PC-9 (cell line): ENCODE measurements at regions of chr20 and their contacts with region 1.

Region 1: GRCh38 chr20:50737352-50737751 is 6.0 kb downstream of the PARD6B start:
- DNase-seq: no peak
- H3K4me3 ChIP-seq: no peak overlapping the region
- H3K27ac ChIP-seq: peak overlapping the region; percentile 89; the same call in 1 of the 2 replicates
- H3K4me1 ChIP-seq: peaks cover 92% of the 10 kb centered on the region
- H3K27me3 ChIP-seq: no peaks in the 10 kb centered on the region
- CTCF ChIP-seq: no peak

Region 2: GRCh38 chr20:50645253-50646118 is 91.9 kb before region 1 on chr20:
- CTCF ChIA-PET with region 1: no interaction called
- POLR2A ChIA-PET with region 1: interaction called, 14 read pairs
- intact Hi-C with region 1: no loop called
- DNase-seq: peak; percentile 97 to 100
- H3K4me3 ChIP-seq: peak overlapping the region; percentile 16; the same call in 1 of the 2 replicates
- H3K27ac ChIP-seq: peak overlapping the region; percentile 86
- H3K4me1 ChIP-seq: peaks cover 62% of the 10 kb centered on the region
- H3K27me3 ChIP-seq: no peaks in the 10 kb centered on the region
- CTCF ChIP-seq: no peak

Region 3: GRCh38 chr20:50750145-50750671 is 12.9 kb after region 1 on chr20:
- CTCF ChIA-PET with region 1: interaction called, 5 read pairs
- POLR2A ChIA-PET with region 1: interaction called, 12 read pairs
- intact Hi-C with region 1: no loop called
- DNase-seq: no peak
- H3K4me3 ChIP-seq: no peak overlapping the region
- H3K27ac ChIP-seq: no peak overlapping the region
- H3K4me1 ChIP-seq: peaks cover 36% of the 10 kb centered on the region
- H3K27me3 ChIP-seq: no peaks in the 10 kb centered on the region
- CTCF ChIP-seq: no peak

Region 4: GRCh38 chr20:50837532-50838506 is 100.5 kb after region 1 on chr20:
- CTCF ChIA-PET with region 1: no interaction called
- POLR2A ChIA-PET with region 1: no interaction called
- intact Hi-C with region 1: no loop called
- DNase-seq: no peak
- H3K4me3 ChIP-seq: no peak overlapping the region
- H3K27ac ChIP-seq: no peak overlapping the region
- H3K4me1 ChIP-seq: no peaks in the 10 kb centered on the region
- H3K27me3 ChIP-seq: no peaks in the 10 kb centered on the region
- CTCF ChIP-seq: no peak